CD8-positive, alpha-beta memory T cell (primary cell): ENCODE measurements at regions of chr10 and their contacts with region 1.

Region 1: GRCh38 chr10:21495752-21496342 is 29.6 kb downstream of the SKIDA1 start:
- DNase-seq: peak; percentile 77 to 86 (median 82)
- H3K4me3 ChIP-seq: peak overlapping the region; percentile 69
- H3K4me3 Mint-ChIP-seq: peak overlapping the region; percentile 85 to 92 (median 89)
- H3K27ac ChIP-seq: no peak overlapping the region
- H3K27ac Mint-ChIP-seq: peak overlapping the region in 2 of 8 donors; percentile 17 to 48
- H3K4me1 ChIP-seq: peaks cover 29% of the 10 kb centered on the region
- H3K4me1 Mint-ChIP-seq: peaks cover 19 to 30% (median 25%) of the 10 kb centered on the region in 3 donors
- H3K27me3 ChIP-seq: peaks cover 51% of the 10 kb centered on the region
- H3K27me3 Mint-ChIP-seq: peaks cover 52 to 68% of the 10 kb centered on the region in 2 donors

Region 2: GRCh38 chr10:21464143-21464533 is 31.7 kb before region 1 on chr10:
- CTCF ChIA-PET with region 1: no interaction called
- POLR2A ChIA-PET with region 1: no interaction called
- DNase-seq: no peak
- H3K4me3 ChIP-seq: no peak overlapping the region
- H3K4me3 Mint-ChIP-seq: no peak overlapping the region
- H3K27ac ChIP-seq: no peak overlapping the region
- H3K27ac Mint-ChIP-seq: no peak overlapping the region
- H3K4me1 ChIP-seq: no peaks in the 10 kb centered on the region
- H3K4me1 Mint-ChIP-seq: no peaks in the 10 kb centered on the region
- H3K27me3 ChIP-seq: no peaks in the 10 kb centered on the region
- H3K27me3 Mint-ChIP-seq: peaks cover 2 to 17% of the 10 kb centered on the region in 2 donors

Region 3: GRCh38 chr10:21516242-21517131 is 20.6 kb after region 1 on chr10:
- CTCF ChIA-PET with region 1: interaction called, 16 read pairs
- POLR2A ChIA-PET with region 1: interaction called, 3 read pairs
- DNase-seq: peak in 4 of 5 donors; percentile 17 to 69 (median 39)
- H3K4me3 ChIP-seq: peak overlapping the region; percentile 51
- H3K4me3 Mint-ChIP-seq: peak overlapping the region; percentile 44 to 89 (median 76)
- H3K27ac ChIP-seq: no peak overlapping the region
- H3K27ac Mint-ChIP-seq: peak overlapping the region in 2 of 8 donors; percentile 37 to 47
- H3K4me1 ChIP-seq: peaks cover 37% of the 10 kb centered on the region
- H3K4me1 Mint-ChIP-seq: peaks cover 33 to 41% (median 36%) of the 10 kb centered on the region in 3 donors
- H3K27me3 ChIP-seq: peaks cover 81% of the 10 kb centered on the region
- H3K27me3 Mint-ChIP-seq: peaks cover 80 to 88% of the 10 kb centered on the region in 2 donors

Region 4: DNA sequence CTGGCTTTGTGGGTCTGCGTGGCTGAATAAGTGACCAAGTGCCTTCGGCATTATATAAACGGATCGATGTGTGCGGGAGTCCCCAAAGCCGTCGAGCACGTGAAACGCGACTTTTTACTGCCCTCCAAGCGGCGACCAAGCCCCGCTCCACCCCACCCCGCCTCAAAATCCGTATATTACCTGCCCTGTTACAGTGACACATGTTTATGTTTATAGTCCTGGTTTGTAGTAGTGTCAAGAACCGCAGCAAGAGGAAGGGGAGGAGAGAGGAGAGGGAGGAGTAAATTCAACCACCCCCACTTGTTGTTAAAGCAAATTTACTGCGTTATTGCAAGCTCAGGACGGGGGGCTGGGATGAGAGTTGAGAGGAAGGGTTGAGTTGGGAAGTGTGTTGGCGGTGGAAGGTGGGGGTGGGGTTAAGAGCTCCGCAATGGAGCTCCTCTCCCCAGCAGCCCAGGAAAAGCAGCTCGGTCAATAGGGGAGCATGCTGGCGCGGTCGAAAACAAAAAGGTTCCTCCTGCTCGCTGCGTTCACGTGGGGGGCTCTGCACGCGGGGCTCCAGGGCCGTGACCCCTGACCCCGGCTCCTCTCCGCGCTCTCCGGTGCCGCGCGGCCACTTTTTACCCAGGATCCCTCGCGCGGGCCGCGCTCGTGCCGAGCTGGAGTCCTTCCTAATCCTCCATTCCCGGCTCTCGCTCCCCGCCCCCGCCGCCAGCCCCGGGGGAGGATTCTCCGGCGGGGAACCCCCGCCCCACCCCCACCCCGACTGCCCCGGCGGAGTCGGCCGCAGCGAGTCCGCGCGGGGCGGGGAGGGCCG is 29.7 kb after region 1 on chr10 and contains the start of gene SKIDA1:
- CTCF ChIA-PET with region 1: interaction called, 19 read pairs
- POLR2A ChIA-PET with region 1: interaction called, 13 read pairs
- DNase-seq: peak; percentile 41 to 73 (median 54)
- H3K4me3 ChIP-seq: peak within 1 kb of the TSS; percentile 83
- H3K4me3 Mint-ChIP-seq: peak within 1 kb of the TSS; percentile 82 to 99 (median 95)
- H3K27ac ChIP-seq: peak within 1 kb of the TSS; percentile 72
- H3K27ac Mint-ChIP-seq: peak within 1 kb of the TSS; percentile 72 to 99 (median 95)
- H3K4me1 ChIP-seq: peaks cover 13% of the 10 kb centered on the region
- H3K4me1 Mint-ChIP-seq: peaks cover 23 to 38% (median 32%) of the 10 kb centered on the region in 3 donors
- H3K27me3 ChIP-seq: peaks cover 6% of the 10 kb centered on the region
- H3K27me3 Mint-ChIP-seq: peaks cover 27 to 28% of the 10 kb centered on the region in 2 donors
- total RNA-seq, gene SKIDA1: 0.24 to 0.35 TPM

Region 5: DNA sequence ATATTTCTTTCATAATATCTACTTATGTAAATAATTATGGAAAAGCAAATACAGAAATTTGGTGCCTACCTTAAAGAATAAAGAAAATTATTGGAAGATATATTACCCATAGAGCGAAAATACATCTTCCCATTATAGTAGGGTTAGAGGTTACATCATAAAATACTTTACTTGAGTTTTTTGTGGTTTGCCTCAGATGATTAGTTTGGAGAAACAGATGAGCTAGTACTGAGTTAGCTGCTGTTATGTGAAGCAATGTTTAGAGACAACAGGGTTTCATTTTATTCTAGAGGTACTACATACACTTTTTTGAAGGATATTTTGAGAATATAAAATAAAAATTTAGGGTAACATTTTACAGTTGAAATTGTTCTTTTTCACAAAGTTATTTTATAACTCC is 35.3 kb after region 1 on chr10:
- CTCF ChIA-PET with region 1: interaction called, 19 read pairs
- POLR2A ChIA-PET with region 1: interaction called, 13 read pairs
- DNase-seq: no peak
- H3K4me3 ChIP-seq: no peak overlapping the region
- H3K4me3 Mint-ChIP-seq: no peak overlapping the region
- H3K27ac ChIP-seq: no peak overlapping the region
- H3K27ac Mint-ChIP-seq: peak overlapping the region in 1 of 8 donors; percentile 79
- H3K4me1 ChIP-seq: peaks cover 24% of the 10 kb centered on the region
- H3K4me1 Mint-ChIP-seq: peaks cover 29 to 42% (median 42%) of the 10 kb centered on the region in 3 donors
- H3K27me3 ChIP-seq: no peaks in the 10 kb centered on the region
- H3K27me3 Mint-ChIP-seq: peaks cover 0 to 5% of the 10 kb centered on the region in 2 donors

Region 6: GRCh38 chr10:21950566-21950965 is 454.7 kb after region 1 on chr10:
- CTCF ChIA-PET with region 1: interaction called, 11 read pairs
- POLR2A ChIA-PET with region 1: no interaction called
- DNase-seq: no peak
- H3K4me3 ChIP-seq: no peak overlapping the region
- H3K4me3 Mint-ChIP-seq: no peak overlapping the region
- H3K27ac ChIP-seq: no peak overlapping the region
- H3K27ac Mint-ChIP-seq: no peak overlapping the region
- H3K4me1 ChIP-seq: no peaks in the 10 kb centered on the region
- H3K4me1 Mint-ChIP-seq: peaks cover 7 to 14% (median 9%) of the 10 kb centered on the region in 3 donors
- H3K27me3 ChIP-seq: no peaks in the 10 kb centered on the region
- H3K27me3 Mint-ChIP-seq: no peaks in the 10 kb centered on the region

Region 7: DNA sequence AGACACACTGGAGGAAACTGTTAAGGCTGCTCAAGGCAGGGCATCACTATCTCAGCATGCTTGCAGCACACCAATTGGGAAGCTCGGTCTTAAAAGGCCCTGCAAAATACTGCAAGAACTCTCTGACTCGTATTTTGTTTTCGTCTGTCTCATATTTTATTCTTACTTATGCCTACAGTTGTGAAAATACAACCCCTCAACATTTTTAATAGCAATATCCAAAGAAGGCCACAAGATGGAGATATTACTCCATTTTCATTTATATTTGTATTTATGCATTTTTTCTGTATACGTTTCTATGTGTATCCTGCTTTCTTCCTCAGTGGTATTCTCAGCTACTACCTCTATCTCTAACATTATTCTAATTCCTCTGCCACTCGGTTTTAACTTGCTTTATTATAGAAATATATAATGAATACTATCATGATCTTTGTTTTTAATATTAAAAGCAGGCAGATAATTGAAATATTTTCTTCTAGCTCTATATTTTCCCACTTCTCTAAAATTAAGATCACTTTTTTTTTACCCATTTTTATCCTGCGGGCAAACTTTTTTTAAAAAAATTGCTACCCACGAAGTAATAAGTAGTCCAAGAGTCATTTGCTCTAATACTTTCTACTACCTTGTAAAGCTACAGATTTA is 497.6 kb after region 1 on chr10:
- CTCF ChIA-PET with region 1: interaction called, 12 read pairs
- POLR2A ChIA-PET with region 1: no interaction called
- DNase-seq: peak in 2 of 5 donors; percentile 42 to 44
- H3K4me3 ChIP-seq: no peak overlapping the region
- H3K4me3 Mint-ChIP-seq: no peak overlapping the region
- H3K27ac ChIP-seq: no peak overlapping the region
- H3K27ac Mint-ChIP-seq: no peak overlapping the region
- H3K4me1 ChIP-seq: no peaks in the 10 kb centered on the region
- H3K4me1 Mint-ChIP-seq: peaks cover 36 to 54% (median 46%) of the 10 kb centered on the region in 3 donors
- H3K27me3 ChIP-seq: no peaks in the 10 kb centered on the region
- H3K27me3 Mint-ChIP-seq: no peaks in the 10 kb centered on the region